Activated CD4-positive, alpha-beta T cell treated with anti-CD3 and anti-CD28 coated beads, Interleukin-2, amount 10 ng/mL, durations not matched to agents 7 days and 5 days (primary cell): ENCODE measurements at regions of chr11 and their contacts with region 1.

Region 1: DNA sequence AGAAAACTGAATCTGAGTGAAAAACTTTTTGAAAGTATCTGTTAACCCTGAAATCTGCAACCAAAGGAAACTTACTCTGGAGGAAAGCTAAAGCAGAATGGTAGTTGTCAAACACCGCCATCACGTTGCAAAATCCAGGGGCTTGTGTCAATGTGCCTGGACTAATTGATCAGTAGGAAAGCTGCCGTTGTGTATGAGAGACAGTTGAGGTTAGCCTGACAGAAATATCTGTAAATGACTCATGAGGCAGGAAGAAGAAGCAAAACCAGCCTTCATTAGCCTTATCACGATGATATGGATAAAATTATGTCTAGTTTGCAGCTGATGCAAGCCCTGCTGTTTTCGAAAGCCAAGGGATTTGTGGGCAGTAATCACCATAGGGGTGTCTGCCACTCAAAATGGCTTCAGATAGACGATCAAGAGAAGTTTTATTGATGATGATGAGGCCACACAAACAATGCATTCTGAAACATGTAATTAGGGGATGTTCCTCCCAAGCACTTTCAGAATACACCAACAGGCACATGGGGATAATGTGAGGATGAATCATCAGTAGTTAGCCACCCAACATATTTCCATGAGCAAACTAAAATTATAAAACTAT is 8.9 kb downstream of the SCGB1A1 start:
- DNase-seq: peak; percentile 24
- H3K4me3 Mint-ChIP-seq: peak overlapping the region; percentile 3
- H3K27ac Mint-ChIP-seq: peak overlapping the region; percentile 88
- H3K4me1 Mint-ChIP-seq: peaks cover 60% of the 10 kb centered on the region
- H3K27me3 Mint-ChIP-seq: peaks cover 5% of the 10 kb centered on the region

Region 2: DNA sequence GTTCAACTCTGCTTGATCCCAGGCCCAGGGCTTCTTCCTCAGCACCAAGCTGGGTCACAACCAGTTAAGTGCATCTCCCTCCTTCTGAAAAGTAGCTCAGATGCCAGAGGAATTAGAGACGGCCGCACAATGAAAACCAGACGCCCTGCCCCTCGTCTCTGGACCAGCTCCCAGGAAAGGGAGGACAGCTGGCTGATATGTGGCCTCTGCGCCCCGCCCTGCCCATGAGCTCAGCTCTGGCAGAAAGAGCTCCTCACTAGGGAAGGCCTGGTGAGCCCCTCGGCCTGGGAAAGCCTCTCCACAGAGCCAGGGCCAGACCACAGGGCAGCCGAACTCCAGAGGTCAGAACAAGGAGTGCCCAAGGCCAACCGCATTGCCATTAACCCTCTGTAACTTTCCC is 27.0 kb before region 1 on chr11:
- CTCF ChIA-PET with region 1: interaction called, 19 read pairs
- POLR2A ChIA-PET with region 1: no interaction called
- DNase-seq: no peak
- H3K4me3 Mint-ChIP-seq: no peak overlapping the region
- H3K27ac Mint-ChIP-seq: no peak overlapping the region
- H3K4me1 Mint-ChIP-seq: peaks cover 31% of the 10 kb centered on the region
- H3K27me3 Mint-ChIP-seq: no peaks in the 10 kb centered on the region

Region 3: DNA sequence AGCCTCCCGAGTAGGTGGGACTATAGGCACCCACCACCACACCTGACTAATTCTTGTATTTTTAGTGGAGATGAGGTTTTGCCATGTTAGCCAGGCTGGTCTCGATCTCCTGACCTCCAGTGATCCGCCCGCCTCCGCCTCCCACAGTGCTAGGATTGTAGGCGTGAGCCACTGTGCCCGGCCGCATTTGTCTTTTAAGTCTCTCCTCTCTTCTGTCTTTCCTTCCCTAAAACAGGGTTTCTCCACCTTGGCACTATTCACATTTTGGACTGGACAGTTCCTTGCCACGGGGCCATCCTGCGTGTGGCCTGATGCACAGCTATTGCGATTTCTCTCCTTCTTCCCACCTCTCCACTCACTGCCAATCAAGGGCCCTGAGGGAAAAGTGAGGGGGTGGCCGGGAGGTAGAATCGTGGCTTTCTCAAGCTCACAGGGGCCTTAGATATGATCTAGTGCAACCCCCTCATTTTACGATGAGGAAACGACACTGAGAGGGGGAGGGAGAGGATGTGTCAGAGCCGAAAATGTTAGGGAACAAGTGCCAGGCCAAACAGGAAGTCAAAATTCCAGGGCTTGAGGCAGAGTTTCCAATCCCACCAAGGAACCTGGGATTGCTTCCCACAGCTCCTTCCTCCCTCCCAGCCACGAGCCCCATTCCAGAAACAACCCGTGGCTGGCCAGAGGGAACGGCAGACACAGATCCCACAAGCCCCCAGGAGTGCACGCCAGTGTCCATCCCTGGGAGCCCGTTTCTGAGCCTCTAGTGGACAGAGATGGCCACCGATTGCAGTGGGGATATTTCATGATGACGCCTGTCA is 12.3 kb after region 1 on chr11:
- CTCF ChIA-PET with region 1: interaction called, 11 read pairs
- POLR2A ChIA-PET with region 1: no interaction called
- DNase-seq: no peak
- H3K4me3 Mint-ChIP-seq: no peak overlapping the region
- H3K27ac Mint-ChIP-seq: no peak overlapping the region
- H3K4me1 Mint-ChIP-seq: peaks cover 19% of the 10 kb centered on the region
- H3K27me3 Mint-ChIP-seq: no peaks in the 10 kb centered on the region

Region 4: DNA sequence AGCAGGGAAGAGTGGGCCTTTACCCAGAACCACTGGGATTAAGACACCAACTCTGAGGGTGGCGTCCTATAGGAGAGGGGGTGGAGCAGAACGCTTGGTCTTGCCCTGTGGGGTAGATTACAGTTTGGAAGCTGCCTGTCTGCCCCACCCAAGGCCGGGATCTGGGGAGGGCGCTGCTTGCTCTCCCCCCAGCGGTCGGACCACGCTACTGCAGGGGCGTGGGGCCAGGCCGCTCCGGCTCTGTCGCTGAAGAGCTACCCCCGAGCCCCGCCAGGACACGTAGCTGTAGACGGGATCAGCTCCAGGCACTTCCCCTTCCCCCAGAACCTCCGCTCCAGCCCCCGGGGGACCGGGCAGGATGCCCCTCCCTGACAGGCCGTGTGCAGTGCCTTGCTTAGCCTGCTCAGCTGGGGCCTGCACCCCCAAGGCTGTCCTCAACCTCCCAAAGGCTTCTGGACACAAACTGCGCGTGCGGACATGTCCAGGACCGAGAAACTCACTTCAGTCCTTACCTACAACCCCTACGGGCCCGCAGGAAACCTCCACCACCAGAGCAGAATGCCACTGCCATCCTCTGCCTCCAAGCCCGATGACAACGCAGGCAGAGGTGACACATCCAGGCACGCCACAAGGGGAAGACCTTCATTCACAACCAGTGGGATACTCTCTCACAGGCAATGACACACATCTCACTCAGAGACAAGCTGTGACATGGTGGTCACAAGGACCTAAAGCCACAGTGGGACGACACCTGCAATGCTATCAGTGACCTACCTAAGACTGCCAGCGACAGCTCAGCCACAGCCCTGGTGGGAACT is 115.2 kb after region 1 on chr11:
- CTCF ChIA-PET with region 1: interaction called, 82 read pairs
- POLR2A ChIA-PET with region 1: no interaction called
- DNase-seq: peak; percentile 75
- H3K4me3 Mint-ChIP-seq: peak overlapping the region; percentile 98
- H3K27ac Mint-ChIP-seq: peak overlapping the region; percentile 80
- H3K4me1 Mint-ChIP-seq: peaks cover 76% of the 10 kb centered on the region
- H3K27me3 Mint-ChIP-seq: peaks cover 6% of the 10 kb centered on the region

Region 5: GRCh38 chr11:62548545-62549335 is 121.0 kb after region 1 on chr11:
- CTCF ChIA-PET with region 1: interaction called, 85 read pairs
- POLR2A ChIA-PET with region 1: interaction called, 3 read pairs
- DNase-seq: no peak
- H3K4me3 Mint-ChIP-seq: no peak overlapping the region
- H3K27ac Mint-ChIP-seq: no peak overlapping the region
- H3K4me1 Mint-ChIP-seq: peaks cover 70% of the 10 kb centered on the region
- H3K27me3 Mint-ChIP-seq: peaks cover 11% of the 10 kb centered on the region

Region 6: GRCh38 chr11:62567018-62567633 is 139.4 kb after region 1 on chr11:
- CTCF ChIA-PET with region 1: interaction called, 85 read pairs
- POLR2A ChIA-PET with region 1: no interaction called
- DNase-seq: no peak
- H3K4me3 Mint-ChIP-seq: no peak overlapping the region
- H3K27ac Mint-ChIP-seq: peak overlapping the region; percentile 68
- H3K4me1 Mint-ChIP-seq: peaks cover 54% of the 10 kb centered on the region
- H3K27me3 Mint-ChIP-seq: no peaks in the 10 kb centered on the region

Region 7: GRCh38 chr11:62974848-62975522 is 547.3 kb after region 1 on chr11:
- CTCF ChIA-PET with region 1: no interaction called
- POLR2A ChIA-PET with region 1: no interaction called
- DNase-seq: no peak
- H3K4me3 Mint-ChIP-seq: no peak overlapping the region
- H3K27ac Mint-ChIP-seq: no peak overlapping the region
- H3K4me1 Mint-ChIP-seq: no peaks in the 10 kb centered on the region
- H3K27me3 Mint-ChIP-seq: peaks cover 6% of the 10 kb centered on the region